Cardiac septum (tissue), 1 donor: ENCODE measurements at regions of chr12 and their contacts with region 1.

Region 1: DNA sequence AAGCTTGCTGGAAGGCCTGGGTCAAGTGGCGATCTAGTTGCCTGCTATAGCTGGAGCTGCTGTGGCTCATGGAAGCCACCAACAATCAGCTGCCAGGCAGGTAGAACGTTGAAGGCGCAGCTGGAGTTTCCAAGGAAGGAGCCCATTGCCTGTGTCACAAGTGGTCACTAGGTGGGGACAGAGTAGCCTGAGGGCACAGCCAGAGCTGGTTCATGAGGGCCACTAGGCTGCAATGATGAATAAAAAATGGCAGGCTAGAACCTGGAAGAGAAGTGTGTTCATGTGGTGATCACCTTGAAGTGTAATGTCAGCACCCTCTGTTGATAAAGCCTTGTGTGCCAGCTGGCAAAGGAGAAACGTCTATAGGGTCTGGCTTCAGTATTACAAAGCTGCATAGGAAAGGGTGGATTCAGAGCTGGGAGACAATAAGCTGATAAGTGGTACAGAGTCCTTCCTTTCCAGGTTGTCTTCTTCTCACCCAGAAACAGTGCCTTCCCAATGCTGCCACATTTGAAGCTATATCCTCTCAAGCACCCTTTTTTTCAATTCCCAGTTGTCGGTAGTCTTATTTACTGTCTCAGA is 165.8 kb downstream of the EMP1 start:
- DNase-seq: no peak

Region 2: GRCh38 chr12:13179211-13180074 is 182.9 kb before region 1 on chr12:
- intact Hi-C with region 1: no loop called
- DNase-seq: no peak

Region 3: DNA sequence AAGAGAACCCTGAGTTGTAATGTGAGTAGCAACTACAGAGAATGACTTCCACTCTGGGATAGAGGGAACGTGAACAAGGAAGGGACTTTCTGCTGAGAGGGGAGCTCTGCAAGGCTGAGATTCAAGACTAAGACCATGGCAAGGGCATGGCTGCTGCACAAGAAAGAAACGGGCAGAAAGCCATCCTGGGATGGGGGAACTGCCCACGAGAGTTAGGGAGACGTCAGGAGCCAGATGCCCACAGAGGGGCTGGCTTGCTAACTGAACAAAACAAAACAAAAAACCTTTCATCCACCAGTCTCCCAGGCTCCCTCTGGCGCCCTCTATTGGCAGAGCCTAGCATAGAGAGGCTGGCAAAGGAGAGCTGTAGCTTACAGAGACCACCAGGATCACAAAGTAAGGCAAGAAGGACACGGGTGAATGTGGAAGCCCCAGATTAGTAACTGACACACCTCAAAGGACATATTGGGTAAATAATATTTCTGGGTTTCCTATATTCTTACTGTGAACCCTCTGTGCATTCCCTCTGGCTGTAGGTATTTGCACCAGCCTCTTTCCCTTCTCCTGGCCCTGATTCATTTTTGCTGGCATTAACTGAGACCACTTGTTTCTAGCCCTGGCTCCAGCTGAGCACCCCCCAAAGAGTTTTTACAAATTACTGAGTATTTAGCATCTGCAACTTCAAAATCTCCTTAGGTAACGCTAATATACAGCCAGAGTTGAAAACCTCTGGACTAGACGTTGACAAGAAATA is 172.5 kb after region 1 on chr12:
- intact Hi-C with region 1: loop called (anchors 2 kb)
- DNase-seq: no peak

Region 4: GRCh38 chr12:13546231-13546630 is 183.9 kb after region 1 on chr12:
- intact Hi-C with region 1: no loop called
- DNase-seq: no peak

Region 5: GRCh38 chr12:13661005-13661887 is 298.9 kb after region 1 on chr12:
- intact Hi-C with region 1: loop called (anchors 5 kb)
- DNase-seq: no peak